Ascending aorta (tissue), 2 donors: ENCODE measurements at regions of chr16 and their contacts with region 1.

Region 1: DNA sequence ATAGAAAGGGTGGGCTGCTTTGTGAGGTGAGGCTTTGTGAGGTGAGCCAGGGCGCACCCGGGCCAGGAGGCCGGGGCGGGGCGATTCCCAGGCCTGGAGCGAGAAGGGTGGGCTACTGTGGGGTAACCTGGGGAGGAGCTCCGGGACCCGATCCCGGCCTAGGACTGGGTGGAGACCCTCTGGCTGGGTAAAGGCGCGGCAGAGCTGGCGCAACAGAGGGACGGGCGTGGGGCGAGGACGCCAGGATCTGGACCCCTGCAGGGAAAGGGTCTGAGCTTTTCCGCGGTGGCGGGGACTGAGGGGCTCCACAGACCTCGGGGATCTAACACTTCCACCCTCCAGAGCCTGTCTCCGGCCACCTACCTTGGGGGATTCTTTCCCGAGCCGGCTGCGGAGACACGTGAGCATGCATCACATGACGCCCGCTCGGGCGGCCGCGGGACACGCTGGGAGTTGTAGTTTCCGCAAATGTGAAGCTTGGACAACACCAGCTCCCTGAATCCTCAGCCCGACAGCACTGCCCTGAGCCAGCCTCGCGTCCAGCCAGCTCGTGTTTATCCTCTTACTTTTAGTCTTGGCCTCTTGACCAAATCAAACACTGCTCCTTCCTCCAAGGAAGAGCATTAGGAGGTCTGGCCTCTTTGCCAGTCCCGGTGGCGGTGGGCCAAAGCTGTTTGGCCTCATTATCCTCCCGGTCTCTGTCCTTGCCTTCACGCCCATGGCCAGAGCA is at the start of gene SLC38A7:
- DNase-seq: peak; percentile 43 to 90
- H3K4me3 ChIP-seq: peak within 1 kb of the TSS; percentile 81 to 86
- H3K27ac ChIP-seq: peak within 1 kb of the TSS; percentile 42 to 77
- H3K4me1 ChIP-seq: peaks cover 3 to 13% of the 10 kb centered on the region in 2 donors
- H3K27me3 ChIP-seq: no peaks in the 10 kb centered on the region
- CTCF ChIP-seq: no peak
- total RNA-seq, gene SLC38A7: 23.5 TPM

Region 2: DNA sequence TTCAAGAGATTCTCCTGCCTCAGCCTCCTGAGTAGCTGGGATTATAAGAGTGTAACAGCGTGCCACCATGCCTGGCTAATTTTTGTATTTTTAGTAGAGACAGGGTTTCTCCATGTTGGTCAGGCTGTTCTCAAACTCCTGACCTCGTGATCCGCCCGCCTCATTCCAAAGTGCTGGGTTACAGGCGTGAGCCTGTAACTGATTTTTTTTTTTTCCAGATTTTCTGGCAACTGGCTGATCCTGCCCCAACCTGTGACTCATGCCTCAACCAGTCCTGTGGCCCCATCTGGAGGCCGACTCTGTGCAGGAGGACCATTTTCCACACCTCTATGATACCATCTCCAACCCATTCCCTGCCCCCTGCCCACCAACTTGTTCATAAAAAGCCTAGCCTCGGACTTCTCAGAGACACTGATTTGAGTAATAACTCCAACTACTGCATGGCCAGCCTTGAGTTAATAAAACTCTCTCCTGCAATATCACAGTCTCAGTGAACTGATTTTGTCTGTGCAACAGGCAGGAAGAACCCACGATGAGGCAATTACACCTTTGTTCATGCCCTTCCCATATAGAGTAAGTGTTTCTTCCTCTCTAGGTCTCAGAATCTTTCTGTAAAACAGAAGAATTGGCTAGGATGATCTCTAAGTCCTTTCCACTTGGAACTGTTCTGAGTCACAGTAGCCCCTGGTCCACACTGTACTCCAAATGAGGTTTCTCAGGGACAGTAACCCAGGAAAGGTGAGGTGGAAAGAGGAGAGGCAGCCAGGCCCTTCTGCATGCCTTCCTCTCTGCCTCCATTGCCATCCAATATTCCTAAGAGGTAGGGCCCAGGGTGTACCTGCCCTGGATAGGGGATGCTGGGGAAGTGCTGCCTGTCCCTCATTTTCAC is 46.1 kb before region 1 on chr16:
- intact Hi-C with region 1: no loop called
- DNase-seq: no peak
- H3K4me3 ChIP-seq: no peak overlapping the region
- H3K27ac ChIP-seq: no peak overlapping the region
- H3K4me1 ChIP-seq: no peaks in the 10 kb centered on the region
- H3K27me3 ChIP-seq: no peaks in the 10 kb centered on the region
- CTCF ChIP-seq: peak in 1 of 3 experiments; percentile 22

Region 3: GRCh38 chr16:58733671-58734458 is 49.3 kb after region 1 on chr16 and contains the start of gene GOT2:
- intact Hi-C with region 1: loop called (anchors 2 kb)
- DNase-seq: peak; percentile 28 to 88
- H3K4me3 ChIP-seq: peak within 1 kb of the TSS; percentile 85 to 93
- H3K27ac ChIP-seq: peak within 1 kb of the TSS; percentile 75 to 81
- H3K4me1 ChIP-seq: peaks cover 12 to 14% of the 10 kb centered on the region in 2 donors
- H3K27me3 ChIP-seq: no peaks in the 10 kb centered on the region
- CTCF ChIP-seq: peak; percentile 70 to 94 (median 88)
- total RNA-seq, gene GOT2: 48.7 TPM